Mammary epithelial cell (primary cell): ENCODE measurements at regions of chr12 and their contacts with region 1.

Region 1: GRCh38 chr12:80087486-80088213 is 11.7 kb upstream of the OTOGL start:
- DNase-seq: no peak
- H3K4me3 ChIP-seq: no peak overlapping the region
- H3K27ac ChIP-seq: no peak overlapping the region
- H3K4me1 ChIP-seq: no peaks in the 10 kb centered on the region
- H3K27me3 ChIP-seq: no peaks in the 10 kb centered on the region
- CTCF ChIP-seq: no peak

Region 2: DNA sequence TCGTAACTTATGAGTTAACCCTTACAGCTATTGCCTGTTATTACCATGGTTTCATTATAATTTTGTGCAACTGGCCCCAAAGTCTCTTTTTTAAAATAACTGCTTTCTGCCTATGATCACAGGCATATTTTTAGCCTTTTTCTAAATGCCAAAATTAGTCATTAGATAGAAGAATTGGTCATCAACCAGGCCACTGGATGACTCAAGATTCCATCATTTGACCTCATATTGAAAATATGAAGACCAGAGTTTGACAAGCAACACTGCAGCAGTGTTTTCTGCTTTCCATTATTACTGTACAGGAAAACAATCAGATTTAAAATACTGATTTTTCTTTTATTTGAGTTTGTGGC is 43.0 kb before region 1 on chr12:
- CTCF ChIA-PET with region 1: no interaction called
- dilution Hi-C with region 1: no loop called
- in situ Hi-C with region 1: no loop called
- intact Hi-C with region 1: no loop called
- DNase-seq: peak; percentile 84
- H3K4me3 ChIP-seq: no peak overlapping the region
- H3K27ac ChIP-seq: peak overlapping the region; percentile 41
- H3K4me1 ChIP-seq: peaks cover 17% of the 10 kb centered on the region
- H3K27me3 ChIP-seq: no peaks in the 10 kb centered on the region
- CTCF ChIP-seq: no peak

Region 3: DNA sequence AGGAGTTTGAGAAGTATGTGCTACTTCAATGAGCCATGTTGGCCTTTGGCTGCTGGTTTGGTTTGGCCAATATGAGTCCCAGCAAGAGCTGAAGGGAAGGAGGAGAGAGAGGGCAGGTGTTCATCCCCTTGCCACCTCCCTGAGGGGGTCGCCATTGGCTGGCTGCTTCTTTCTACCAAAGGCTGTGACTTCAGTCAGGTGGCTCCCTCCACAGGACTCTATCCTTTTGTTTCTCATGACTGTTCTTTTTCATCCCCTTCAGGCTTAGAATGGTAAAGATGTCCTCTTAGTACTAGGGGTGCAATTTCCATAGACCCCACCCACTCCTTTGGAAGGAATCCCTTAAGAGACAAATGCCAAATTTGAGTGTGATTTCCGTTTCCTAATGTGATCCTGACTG is 19.5 kb before region 1 on chr12:
- CTCF ChIA-PET with region 1: no interaction called
- dilution Hi-C with region 1: no loop called
- in situ Hi-C with region 1: no loop called
- intact Hi-C with region 1: loop called (anchors 1 kb)
- DNase-seq: no peak
- H3K4me3 ChIP-seq: no peak overlapping the region
- H3K27ac ChIP-seq: no peak overlapping the region
- H3K4me1 ChIP-seq: no peaks in the 10 kb centered on the region
- H3K27me3 ChIP-seq: no peaks in the 10 kb centered on the region
- CTCF ChIP-seq: no peak